ENCODE measurements at regions of chr4 and their contacts with region 1.

Region 1: DNA sequence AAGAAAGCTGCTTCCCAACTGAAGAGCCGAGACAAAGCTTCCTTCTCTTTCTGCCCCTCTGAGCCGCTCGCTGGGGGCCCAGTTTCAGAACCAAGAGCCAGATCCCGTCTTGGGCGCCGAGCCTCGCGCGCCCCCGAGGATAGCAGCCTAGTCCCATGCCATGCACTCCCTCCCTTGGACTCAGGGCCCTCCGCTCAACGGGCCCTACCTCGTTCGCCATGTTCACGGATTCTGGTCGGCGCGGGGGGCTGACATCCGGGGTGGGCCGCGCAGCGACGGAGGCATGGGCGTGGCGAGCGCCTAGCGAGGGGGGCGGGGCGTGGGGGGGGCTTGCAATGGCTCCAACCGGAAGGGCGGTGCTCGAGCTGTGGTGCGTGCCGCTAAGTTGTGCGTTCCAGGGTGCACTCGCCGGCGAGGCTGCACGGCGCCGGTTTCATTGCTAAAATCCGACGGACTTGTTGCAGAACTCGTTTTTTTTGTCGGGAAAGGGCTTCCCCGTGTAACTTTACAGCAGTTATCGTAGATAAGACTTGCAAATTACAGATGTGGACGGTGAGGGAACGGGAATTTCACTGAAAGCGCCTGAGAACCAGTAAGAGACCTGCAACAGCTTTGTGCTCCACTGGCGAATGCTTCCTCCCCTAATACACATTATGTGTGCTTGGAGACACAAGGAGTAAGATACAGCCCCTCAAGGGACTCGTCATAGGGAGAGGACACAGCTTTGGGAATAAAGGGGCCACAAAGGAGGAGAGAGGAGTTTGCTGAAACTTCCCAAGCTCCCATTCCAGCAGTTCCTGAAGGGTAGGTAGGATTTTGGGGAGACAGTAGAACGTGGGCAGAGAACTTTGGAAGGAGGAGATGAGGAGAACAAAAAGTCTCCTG is at the start of gene ADH5:
- DNase-seq: peak; percentile 93
- H3K4me3 ChIP-seq: peak within 1 kb of the TSS; percentile 75
- H3K27ac ChIP-seq: peak within 1 kb of the TSS; percentile 50
- H3K4me1 ChIP-seq: peaks cover 23% of the 10 kb centered on the region
- CTCF ChIP-seq: no peak
- total RNA-seq, gene ADH5: 50.0 and 62.6 TPM in 2 replicates

Region 2: DNA sequence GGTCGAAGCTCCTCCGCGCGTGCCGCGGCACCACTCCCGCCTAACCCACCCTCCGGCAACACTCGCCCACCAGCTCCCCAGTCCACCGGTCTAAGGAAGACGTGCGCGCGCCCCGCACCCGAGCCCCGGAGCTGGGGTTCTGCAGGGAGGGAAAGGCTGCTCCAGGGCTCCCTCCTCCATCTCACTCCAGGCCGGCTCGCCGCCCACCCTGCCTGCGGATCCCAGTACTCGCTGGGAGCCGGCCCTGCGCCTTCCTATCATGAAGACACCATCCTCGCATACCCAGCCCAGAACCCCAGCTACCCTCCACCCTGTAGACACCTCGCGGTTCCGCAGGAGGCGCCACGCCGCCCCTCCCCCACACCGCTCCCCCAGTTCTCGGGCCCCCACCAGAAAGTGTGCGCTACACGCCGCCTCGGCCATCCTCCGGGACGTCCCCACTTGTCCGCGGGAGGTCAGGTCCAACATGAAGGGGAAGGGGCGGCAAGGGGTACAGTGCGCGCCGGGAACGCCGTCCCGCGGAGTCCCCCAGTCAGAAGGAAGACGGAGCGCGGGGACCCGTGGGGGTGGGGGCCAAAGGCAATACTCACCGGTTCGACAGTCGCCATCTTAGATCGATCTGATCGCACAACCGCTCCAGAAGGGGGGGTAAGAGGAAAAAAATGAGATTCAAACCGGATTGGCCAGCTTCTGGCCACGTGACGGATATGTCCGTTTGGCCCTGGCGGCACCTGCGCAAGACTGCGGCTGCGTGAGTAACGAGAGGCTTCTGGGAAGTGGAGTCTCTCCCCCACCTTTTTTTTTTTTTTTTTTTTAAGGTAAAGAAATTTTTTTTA is 160.0 kb before region 1 on chr4 and contains the start of gene EIF4E:
- CTCF ChIA-PET with region 1: no interaction called
- POLR2A ChIA-PET with region 1: interaction called, 5 read pairs
- intact Hi-C with region 1: loop called (anchors 5 kb)
- DNase-seq: peak; percentile 99
- H3K4me3 ChIP-seq: peak within 1 kb of the TSS; percentile 88
- H3K27ac ChIP-seq: peak within 1 kb of the TSS; percentile 83
- H3K4me1 ChIP-seq: peaks cover 32% of the 10 kb centered on the region
- CTCF ChIP-seq: peak; percentile 45
- total RNA-seq, gene EIF4E: 136 and 152 TPM in 2 replicates

Region 3: GRCh38 chr4:99054428-99054994 is 34.2 kb before region 1 on chr4:
- CTCF ChIA-PET with region 1: no interaction called
- POLR2A ChIA-PET with region 1: interaction called, 10 read pairs
- intact Hi-C with region 1: no loop called
- DNase-seq: no peak
- H3K4me3 ChIP-seq: no peak overlapping the region
- H3K27ac ChIP-seq: no peak overlapping the region
- H3K4me1 ChIP-seq: peaks cover 14% of the 10 kb centered on the region
- CTCF ChIP-seq: no peak

Measured in OCI-LY7 (cell line).